ENCODE measurements at regions of chrX and their contacts with region 1.

Region 1: GRCh38 chrX:44872817-44873414 is at the start of gene KDM6A:
- DNase-seq: peak; percentile 83
- ATAC-seq: peak; percentile 88
- H3K4me3 Mint-ChIP-seq: peak within 1 kb of the TSS; percentile 90
- H3K27ac Mint-ChIP-seq: peak within 1 kb of the TSS; percentile 88
- H3K4me1 Mint-ChIP-seq: peaks cover 25% of the 10 kb centered on the region
- H3K27me3 Mint-ChIP-seq: no peaks in the 10 kb centered on the region
- CTCF ChIP-seq: no peak
- total RNA-seq, gene KDM6A: 32.1 and 36.0 TPM in 2 replicates

Region 2: DNA sequence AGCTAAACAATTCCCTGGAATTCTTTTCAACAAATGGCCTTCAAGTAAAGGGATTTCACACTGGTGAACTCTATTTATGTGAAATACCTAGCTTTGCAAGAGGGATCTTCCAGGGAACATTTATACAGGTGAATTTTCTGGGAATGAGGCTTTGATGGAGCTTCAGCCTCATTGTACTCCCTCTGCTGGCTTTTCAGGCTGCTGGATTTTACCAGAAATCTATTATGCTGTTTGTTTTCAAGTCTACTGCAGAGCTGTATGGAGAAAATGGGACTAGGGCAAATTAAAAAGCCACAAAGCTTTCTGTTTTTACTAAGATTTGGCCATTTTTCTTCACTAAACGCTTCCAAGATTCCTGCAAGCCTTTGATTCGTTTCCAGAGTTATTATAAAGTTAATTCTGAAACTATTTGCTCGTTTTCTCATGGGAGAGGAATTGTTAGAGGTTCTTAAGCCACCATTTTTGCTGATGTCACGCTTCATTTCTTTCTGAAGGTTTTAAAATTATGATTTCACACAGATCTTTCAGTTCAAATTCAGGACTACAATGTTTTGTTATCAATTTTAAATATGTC is 31.7 kb after region 1 on chrX:
- CTCF ChIA-PET with region 1: no interaction called
- POLR2A ChIA-PET with region 1: interaction called, 8 read pairs
- intact Hi-C with region 1: loop called (anchors 5 kb)
- DNase-seq: no peak
- ATAC-seq: no peak
- H3K4me3 Mint-ChIP-seq: no peak overlapping the region
- H3K27ac Mint-ChIP-seq: no peak overlapping the region
- H3K4me1 Mint-ChIP-seq: peaks cover 80% of the 10 kb centered on the region
- H3K27me3 Mint-ChIP-seq: no peaks in the 10 kb centered on the region
- CTCF ChIP-seq: no peak

Region 3: GRCh38 chrX:45070116-45071007 is 197.4 kb after region 1 on chrX:
- CTCF ChIA-PET with region 1: no interaction called
- POLR2A ChIA-PET with region 1: interaction called, 9 read pairs
- intact Hi-C with region 1: loop called (anchors 1 kb)
- DNase-seq: no peak
- ATAC-seq: peak; percentile 40
- H3K4me3 Mint-ChIP-seq: no peak overlapping the region
- H3K27ac Mint-ChIP-seq: peak overlapping the region; percentile 37
- H3K4me1 Mint-ChIP-seq: peaks cover 38% of the 10 kb centered on the region
- H3K27me3 Mint-ChIP-seq: no peaks in the 10 kb centered on the region
- CTCF ChIP-seq: no peak

Region 4: DNA sequence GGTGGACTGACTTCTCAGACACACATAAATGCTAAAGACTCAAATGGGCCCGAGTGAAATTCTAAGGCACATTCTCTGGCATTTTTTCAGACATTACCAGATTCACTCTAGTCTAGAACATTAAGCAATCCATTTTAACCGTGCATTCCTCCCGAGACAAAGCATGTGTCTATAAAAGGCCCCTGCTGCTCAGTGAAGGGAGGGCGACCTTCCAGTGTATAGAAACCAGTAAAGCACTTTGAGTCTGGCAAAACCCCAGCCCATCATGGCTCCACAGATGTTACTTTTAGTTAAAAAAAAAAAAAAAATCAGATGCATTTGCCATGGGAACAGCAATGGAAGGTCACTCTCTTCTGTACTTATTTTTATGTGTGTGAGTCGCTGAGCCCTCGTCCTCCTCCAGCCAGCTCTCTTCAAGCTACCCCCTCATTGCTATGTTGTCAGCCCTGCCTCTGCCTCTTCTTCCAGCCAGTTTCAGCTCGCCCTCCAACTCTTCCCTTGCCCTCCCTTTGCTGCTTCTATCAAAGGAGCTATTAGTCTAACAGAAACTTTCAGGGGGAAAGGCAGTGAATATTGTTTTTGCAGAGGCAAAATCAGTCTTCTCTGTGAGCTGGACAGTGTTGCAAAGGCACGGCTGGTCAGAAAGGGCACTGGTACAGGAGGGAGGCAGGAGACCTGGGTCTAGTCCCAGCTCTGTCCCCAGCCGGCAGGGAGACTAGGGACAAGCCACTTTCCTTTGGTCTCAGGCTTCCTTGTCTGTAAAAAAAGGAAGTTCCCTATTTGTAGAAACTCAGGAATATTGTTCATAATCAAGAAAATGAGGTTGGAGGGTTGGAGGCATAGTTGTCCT is 1028.1 kb after region 1 on chrX:
- CTCF ChIA-PET with region 1: no interaction called
- POLR2A ChIA-PET with region 1: no interaction called
- intact Hi-C with region 1: no loop called
- DNase-seq: no peak
- ATAC-seq: no peak
- H3K4me3 Mint-ChIP-seq: no peak overlapping the region
- H3K27ac Mint-ChIP-seq: no peak overlapping the region
- H3K4me1 Mint-ChIP-seq: no peaks in the 10 kb centered on the region
- H3K27me3 Mint-ChIP-seq: peaks cover 2% of the 10 kb centered on the region
- CTCF ChIP-seq: no peak